ENCODE measurements at regions of chr5 and their contacts with region 1.

Region 1: GRCh38 chr5:147628058-147628895 is 118.4 kb upstream of the DPYSL3 start:
- DNase-seq: peak in 1 of 3 donors; percentile 67
- ATAC-seq: peak; percentile 99
- H3K4me3 ChIP-seq: no peak overlapping the region
- H3K27ac ChIP-seq: no peak overlapping the region
- H3K4me1 ChIP-seq: peaks cover 0 to 5% (median 2%) of the 10 kb centered on the region in 4 donors
- H3K27me3 ChIP-seq: no peaks in the 10 kb centered on the region
- CTCF ChIP-seq: peak; percentile 78 to 91 (median 84)
- POLR2A ChIP-seq: no peak

Region 2: GRCh38 chr5:147452165-147452811 is 176.0 kb before region 1 on chr5:
- intact Hi-C with region 1: no loop called
- DNase-seq: no peak
- ATAC-seq: no peak
- H3K4me3 ChIP-seq: no peak overlapping the region
- H3K27ac ChIP-seq: no peak overlapping the region
- H3K4me1 ChIP-seq: peaks cover 0 to 16% (median 0%) of the 10 kb centered on the region in 4 donors
- H3K27me3 ChIP-seq: peaks cover 0 to 6% of the 10 kb centered on the region in 2 donors
- CTCF ChIP-seq: no peak
- POLR2A ChIP-seq: no peak

Region 3: GRCh38 chr5:147675168-147675567 is 46.9 kb after region 1 on chr5:
- intact Hi-C with region 1: loop called in 1 of 2 experiments (anchors 5 kb)
- DNase-seq: no peak
- ATAC-seq: peak; percentile 49 to 66 (median 62)
- H3K4me3 ChIP-seq: no peak overlapping the region
- H3K27ac ChIP-seq: no peak overlapping the region
- H3K4me1 ChIP-seq: peaks cover 0 to 22% (median 3%) of the 10 kb centered on the region in 4 donors
- H3K27me3 ChIP-seq: no peaks in the 10 kb centered on the region
- CTCF ChIP-seq: peak; percentile 43 to 69 (median 60)
- POLR2A ChIP-seq: no peak

Region 4: GRCh38 chr5:147822686-147823491 is 194.6 kb after region 1 on chr5:
- intact Hi-C with region 1: loop called in 1 of 2 experiments (anchors 5 kb)
- DNase-seq: peak in 2 of 3 donors; percentile 20 to 51
- ATAC-seq: peak; percentile 81 to 91 (median 84)
- H3K4me3 ChIP-seq: no peak overlapping the region
- H3K27ac ChIP-seq: no peak overlapping the region
- H3K4me1 ChIP-seq: peaks cover 0 to 14% (median 6%) of the 10 kb centered on the region in 4 donors
- H3K27me3 ChIP-seq: no peaks in the 10 kb centered on the region
- CTCF ChIP-seq: peak; percentile 81 to 98 (median 84)
- POLR2A ChIP-seq: no peak

Measured in right lobe of liver (tissue), 6 donors.